ENCODE measurements at regions of chr5 and their contacts with region 1.

Region 1: GRCh38 chr5:172159016-172159415 is 29.0 kb downstream of the STK10 start:
- DNase-seq: no peak
- H3K4me3 Mint-ChIP-seq: no peak overlapping the region
- H3K27ac Mint-ChIP-seq: peak overlapping the region; percentile 19
- H3K4me1 Mint-ChIP-seq: peaks cover 29% of the 10 kb centered on the region
- H3K27me3 Mint-ChIP-seq: no peaks in the 10 kb centered on the region

Region 2: GRCh38 chr5:172173831-172174153 is 14.8 kb after region 1 on chr5:
- intact Hi-C with region 1: loop called (anchors 2 kb)
- DNase-seq: peak; percentile 91
- H3K4me3 Mint-ChIP-seq: peak overlapping the region; percentile 90
- H3K27ac Mint-ChIP-seq: peak overlapping the region; percentile 96
- H3K4me1 Mint-ChIP-seq: peaks cover 84% of the 10 kb centered on the region
- H3K27me3 Mint-ChIP-seq: no peaks in the 10 kb centered on the region

Measured in activated CD4-positive, alpha-beta T cell treated with anti-CD3 and anti-CD28 coated beads, Interleukin-2, amount 10 ng/mL, durations not matched to agents 24 days and 14 days (primary cell).